A673 (cell line): ENCODE measurements at regions of chr12 and their contacts with region 1.

Region 1: GRCh38 chr12:86264451-86265342 is 8.5 kb upstream of the MGAT4C start:
- DNase-seq: no peak
- H3K4me3 ChIP-seq: no peak overlapping the region
- H3K27ac ChIP-seq: no peak overlapping the region
- H3K4me1 ChIP-seq: peaks cover 7% of the 10 kb centered on the region
- H3K27me3 ChIP-seq: no peaks in the 10 kb centered on the region
- CTCF ChIP-seq: no peak

Region 2: DNA sequence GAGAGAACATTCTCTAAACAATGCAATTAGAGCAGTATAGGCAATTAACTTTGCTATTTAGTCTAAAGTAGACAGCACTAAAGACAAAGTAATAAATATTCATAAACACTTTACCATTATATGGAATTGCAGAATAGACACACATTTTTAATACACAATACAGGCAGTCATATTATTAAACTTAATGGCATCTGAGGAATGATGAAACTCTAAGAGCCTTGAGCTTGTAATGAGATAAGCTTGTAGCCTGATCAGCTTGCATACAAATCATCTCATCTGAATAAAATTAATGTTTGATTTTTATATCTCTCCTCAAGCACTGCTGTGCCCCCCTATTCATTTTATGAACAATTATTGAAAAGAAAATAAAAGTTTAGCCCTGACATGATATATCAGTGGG is 116.1 kb before region 1 on chr12:
- CTCF ChIA-PET with region 1: no interaction called
- POLR2A ChIA-PET with region 1: no interaction called
- intact Hi-C with region 1: no loop called
- DNase-seq: no peak
- H3K4me3 ChIP-seq: no peak overlapping the region
- H3K27ac ChIP-seq: no peak overlapping the region
- H3K4me1 ChIP-seq: peaks cover 10% of the 10 kb centered on the region
- H3K27me3 ChIP-seq: no peaks in the 10 kb centered on the region
- CTCF ChIP-seq: no peak

Region 3: DNA sequence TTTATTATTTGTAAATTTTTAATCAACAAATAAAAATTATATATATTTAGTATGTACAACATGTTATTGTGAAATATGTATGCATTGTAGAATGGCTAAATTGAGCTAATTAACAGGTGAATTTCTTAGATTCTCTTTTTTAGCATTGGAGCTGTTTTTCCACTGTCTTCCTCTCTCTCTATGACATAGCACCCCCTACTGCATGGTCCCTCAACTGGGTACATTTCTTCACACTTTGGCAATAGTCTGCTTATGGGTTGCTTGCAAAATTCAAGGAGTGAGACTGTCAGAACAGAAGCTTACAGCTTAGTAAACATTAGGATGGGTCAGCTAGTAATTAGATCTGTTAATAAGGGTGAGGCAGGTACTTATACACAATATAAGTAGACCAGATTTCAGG is 650.0 kb after region 1 on chr12:
- CTCF ChIA-PET with region 1: no interaction called
- POLR2A ChIA-PET with region 1: no interaction called
- intact Hi-C with region 1: loop called (anchors 10 kb)
- DNase-seq: peak; percentile 62
- H3K4me3 ChIP-seq: no peak overlapping the region
- H3K27ac ChIP-seq: no peak overlapping the region
- H3K4me1 ChIP-seq: no peaks in the 10 kb centered on the region
- H3K27me3 ChIP-seq: no peaks in the 10 kb centered on the region
- CTCF ChIP-seq: peak; percentile 67

Region 4: DNA sequence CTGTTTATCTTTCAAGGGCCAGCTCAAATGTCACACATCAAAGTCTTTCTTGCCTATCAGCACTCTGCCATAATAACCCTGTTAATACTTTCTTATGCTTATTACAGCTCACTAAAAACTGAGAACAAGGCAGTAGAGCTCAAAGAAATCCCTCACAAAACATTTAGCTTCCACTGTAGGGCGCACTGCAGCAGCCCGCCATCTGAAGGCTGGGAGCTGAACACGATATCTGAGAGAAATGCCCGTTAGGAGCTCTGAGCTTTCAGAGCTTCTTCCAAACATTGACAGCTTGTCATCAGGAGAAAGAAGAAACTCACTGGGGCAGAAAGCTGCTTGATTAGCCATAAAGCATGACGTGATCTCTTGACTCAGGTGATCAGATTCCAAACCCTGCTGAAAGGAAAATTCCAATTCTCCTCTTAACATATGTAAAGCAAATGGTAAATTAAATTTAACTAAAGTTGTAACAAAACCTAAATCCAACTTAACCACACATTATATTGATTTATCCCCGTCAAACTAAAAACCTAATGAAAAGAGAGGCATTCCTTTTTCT is 1588.8 kb after region 1 on chr12:
- CTCF ChIA-PET with region 1: no interaction called
- POLR2A ChIA-PET with region 1: no interaction called
- intact Hi-C with region 1: loop called (anchors 10 kb)
- DNase-seq: no peak
- H3K4me3 ChIP-seq: no peak overlapping the region
- H3K27ac ChIP-seq: no peak overlapping the region
- H3K4me1 ChIP-seq: no peaks in the 10 kb centered on the region
- H3K27me3 ChIP-seq: no peaks in the 10 kb centered on the region
- CTCF ChIP-seq: no peak